ENCODE measurements at regions of chr1 and their contacts with region 1.

Region 1: DNA sequence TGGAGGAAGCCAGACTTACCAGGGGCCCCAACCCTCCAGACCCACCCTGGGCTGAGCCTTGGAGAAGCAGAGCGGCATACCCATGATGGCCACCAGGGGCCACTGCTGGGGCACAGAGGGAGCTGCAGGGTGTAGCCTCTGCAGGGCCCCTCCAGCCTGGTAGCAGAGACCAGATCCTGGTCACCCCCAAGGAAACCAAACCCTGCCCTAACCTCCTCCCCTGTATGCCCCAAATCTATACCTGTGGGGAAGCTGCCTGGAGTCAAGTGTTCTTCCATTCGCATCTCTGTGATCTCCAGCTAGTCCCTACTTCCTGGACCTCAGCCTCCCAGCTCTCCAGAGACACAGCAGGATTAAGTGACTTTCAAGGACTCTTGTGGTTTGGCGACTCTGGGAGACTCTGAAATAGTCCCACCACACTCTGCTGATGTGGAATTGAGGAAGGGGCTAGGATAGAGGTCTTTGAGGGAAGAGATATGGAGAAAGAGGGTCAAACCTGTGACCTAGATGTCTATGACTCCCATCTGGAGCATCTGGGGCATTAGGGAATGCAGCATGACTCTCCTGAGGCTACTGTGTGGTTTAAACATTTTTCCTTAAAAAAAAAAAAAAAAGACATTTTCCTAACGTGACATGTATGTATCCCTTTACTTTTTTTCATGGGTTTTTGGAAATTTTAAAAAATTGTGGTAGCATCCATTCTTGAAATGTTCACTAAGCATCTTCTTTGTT is 119.2 kb upstream of the IPO9 start:
- DNase-seq: no peak
- H3K4me3 ChIP-seq: no peak overlapping the region
- H3K27ac ChIP-seq: peak overlapping the region in 3 of 4 donors; percentile 27 to 36 (median 32)
- H3K4me1 ChIP-seq: peaks cover 62 to 77% (median 71%) of the 10 kb centered on the region in 4 donors
- H3K27me3 ChIP-seq: no peaks in the 10 kb centered on the region
- CTCF ChIP-seq: peak in 2 of 3 experiments; percentile 90 to 95
- EP300 ChIP-seq: no peak
- POLR2A ChIP-seq: no peak

Region 2: DNA sequence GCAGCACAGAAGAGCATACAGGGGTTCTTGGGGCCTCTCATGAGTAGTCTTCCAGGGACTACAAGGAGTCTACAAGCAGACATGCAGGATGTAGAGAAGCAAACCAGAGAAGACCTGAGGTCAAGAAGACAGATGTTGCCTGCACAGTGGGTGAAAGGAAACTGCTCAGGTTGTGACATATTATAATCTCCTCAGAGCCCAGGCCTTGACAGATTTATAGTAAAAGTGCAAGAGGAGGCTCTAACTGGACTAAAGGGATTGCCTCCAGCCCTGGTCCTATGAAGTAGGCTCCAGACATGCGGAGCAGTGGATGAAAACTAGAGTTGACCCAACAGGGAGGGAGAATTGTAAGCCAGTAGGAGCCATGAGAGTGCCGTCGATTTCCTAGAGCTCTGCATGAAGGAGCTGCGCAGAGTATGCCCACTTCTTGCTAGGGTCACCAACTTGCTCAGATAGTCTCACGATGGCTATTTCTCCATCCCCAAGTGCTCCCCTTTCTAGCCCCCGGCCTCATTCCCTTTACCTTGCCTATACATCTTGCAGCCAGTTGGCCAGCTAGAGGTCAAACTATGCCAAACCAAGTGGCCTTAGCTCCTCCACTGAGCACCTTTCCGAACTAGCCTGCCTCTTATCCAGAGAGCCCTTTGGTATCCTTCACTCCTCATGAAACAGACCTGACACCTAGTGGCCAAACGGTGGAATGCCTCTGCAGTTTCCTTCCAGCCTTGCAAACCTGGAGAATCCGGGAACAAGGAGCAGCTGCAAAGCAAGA is 83.0 kb after region 1 on chr1:
- intact Hi-C with region 1: loop called (anchors 1 kb)
- DNase-seq: peak; percentile 96
- H3K4me3 ChIP-seq: no peak overlapping the region
- H3K27ac ChIP-seq: peak overlapping the region; percentile 52 to 75 (median 69)
- H3K4me1 ChIP-seq: peaks cover 44 to 47% (median 45%) of the 10 kb centered on the region in 4 donors
- H3K27me3 ChIP-seq: no peaks in the 10 kb centered on the region
- CTCF ChIP-seq: peak; percentile 96 to 98 (median 97)
- EP300 ChIP-seq: no peak
- POLR2A ChIP-seq: no peak